ENCODE measurements at regions of chr17 and their contacts with region 1.

Region 1: GRCh38 chr17:39174907-39175694 is 9.1 kb upstream of the ARL5C start:
- DNase-seq: peak; percentile 56 to 89 (median 83)
- ATAC-seq: peak; percentile 93
- H3K4me3 ChIP-seq: no peak overlapping the region
- H3K4me3 Mint-ChIP-seq: no peak overlapping the region
- H3K27ac ChIP-seq: no peak overlapping the region
- H3K27ac Mint-ChIP-seq: no peak overlapping the region
- H3K4me1 ChIP-seq: peaks cover 15% of the 10 kb centered on the region
- H3K4me1 Mint-ChIP-seq: peaks cover 23% of the 10 kb centered on the region
- H3K27me3 ChIP-seq: no peaks in the 10 kb centered on the region
- H3K27me3 Mint-ChIP-seq: no peaks in the 10 kb centered on the region
- CTCF ChIP-seq: peak; percentile 85

Region 2: DNA sequence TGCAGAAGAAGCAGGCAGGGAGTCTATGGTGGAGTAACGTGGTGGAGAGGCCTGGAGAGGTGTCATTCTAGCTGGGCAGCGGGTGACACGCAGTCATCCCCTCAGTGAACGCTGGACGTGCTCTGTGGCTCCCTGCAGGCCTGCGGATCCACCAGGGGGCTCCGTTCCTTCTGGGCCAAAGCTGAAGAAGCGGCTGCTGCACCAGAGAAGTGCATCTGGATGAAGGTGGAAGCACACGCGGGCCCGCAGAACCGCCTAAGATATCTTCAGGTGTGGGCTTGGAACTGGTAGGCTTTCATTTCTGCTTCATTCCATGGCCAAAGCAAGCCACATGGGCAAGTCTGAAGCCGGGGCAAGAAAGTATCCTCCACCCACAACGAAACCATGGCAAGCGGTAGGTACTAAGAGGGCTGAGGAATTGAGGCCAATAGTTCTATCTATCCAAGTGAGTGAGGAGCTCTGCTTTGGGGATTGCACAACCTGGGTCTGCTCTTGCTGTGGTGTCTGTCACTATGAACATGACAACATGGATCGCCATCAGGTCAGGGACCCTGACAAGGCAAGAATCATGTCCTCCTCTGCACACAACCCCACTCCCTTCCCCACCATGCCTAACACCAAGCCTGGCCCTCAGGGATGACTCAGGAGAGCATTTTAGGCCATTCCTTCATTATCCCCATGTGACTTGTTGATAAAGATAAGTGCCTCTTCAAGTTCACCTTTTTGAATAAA is 129.0 kb before region 1 on chr17:
- CTCF ChIA-PET with region 1: interaction called, 11 read pairs
- POLR2A ChIA-PET with region 1: no interaction called
- intact Hi-C with region 1: no loop called
- DNase-seq: no peak
- ATAC-seq: no peak
- H3K4me3 ChIP-seq: no peak overlapping the region
- H3K4me3 Mint-ChIP-seq: no peak overlapping the region
- H3K27ac ChIP-seq: no peak overlapping the region
- H3K27ac Mint-ChIP-seq: no peak overlapping the region
- H3K4me1 ChIP-seq: no peaks in the 10 kb centered on the region
- H3K4me1 Mint-ChIP-seq: no peaks in the 10 kb centered on the region
- H3K27me3 ChIP-seq: no peaks in the 10 kb centered on the region
- H3K27me3 Mint-ChIP-seq: peaks cover 2% of the 10 kb centered on the region
- CTCF ChIP-seq: no peak

Region 3: DNA sequence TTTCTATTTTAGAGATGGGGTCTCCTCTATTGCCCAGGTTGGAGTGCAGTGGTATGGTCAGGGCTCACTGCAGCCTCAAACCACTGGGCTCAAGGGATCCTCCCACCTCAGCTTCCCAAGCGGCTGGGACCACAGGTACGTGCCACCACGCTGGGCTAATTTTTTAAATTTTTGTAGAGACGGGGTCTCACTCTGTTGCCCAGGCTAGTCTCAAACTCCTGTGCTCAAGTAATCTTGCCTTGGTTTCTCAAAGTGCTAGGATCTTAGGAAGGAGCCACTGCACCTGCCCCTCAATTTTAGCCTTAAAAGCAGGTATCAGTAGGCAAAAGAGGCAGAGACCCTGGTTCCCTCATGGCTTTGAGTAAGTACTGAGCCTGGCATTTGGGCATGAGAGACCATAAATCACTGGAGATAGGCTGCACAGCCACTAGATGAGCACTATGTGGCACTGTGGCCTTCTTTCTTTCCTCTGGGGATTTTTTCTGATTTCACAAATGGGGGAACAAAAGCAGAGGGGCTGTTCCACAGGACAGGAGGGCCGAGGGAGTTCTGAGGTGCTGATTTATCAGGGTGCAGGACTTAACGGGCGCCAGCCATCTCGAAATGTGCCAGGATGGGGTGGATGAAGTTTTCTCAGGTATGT is 105.9 kb before region 1 on chr17:
- CTCF ChIA-PET with region 1: interaction called, 15 read pairs
- POLR2A ChIA-PET with region 1: no interaction called
- intact Hi-C with region 1: loop called (anchors 1 kb)
- DNase-seq: peak in 7 of 9 experiments; percentile 2 to 76 (median 32)
- ATAC-seq: peak; percentile 96
- H3K4me3 ChIP-seq: no peak overlapping the region
- H3K4me3 Mint-ChIP-seq: no peak overlapping the region
- H3K27ac ChIP-seq: no peak overlapping the region
- H3K27ac Mint-ChIP-seq: peak overlapping the region; percentile 57
- H3K4me1 ChIP-seq: no peaks in the 10 kb centered on the region
- H3K4me1 Mint-ChIP-seq: peaks cover 5% of the 10 kb centered on the region
- H3K27me3 ChIP-seq: no peaks in the 10 kb centered on the region
- H3K27me3 Mint-ChIP-seq: no peaks in the 10 kb centered on the region
- CTCF ChIP-seq: peak; percentile 65

Region 4: DNA sequence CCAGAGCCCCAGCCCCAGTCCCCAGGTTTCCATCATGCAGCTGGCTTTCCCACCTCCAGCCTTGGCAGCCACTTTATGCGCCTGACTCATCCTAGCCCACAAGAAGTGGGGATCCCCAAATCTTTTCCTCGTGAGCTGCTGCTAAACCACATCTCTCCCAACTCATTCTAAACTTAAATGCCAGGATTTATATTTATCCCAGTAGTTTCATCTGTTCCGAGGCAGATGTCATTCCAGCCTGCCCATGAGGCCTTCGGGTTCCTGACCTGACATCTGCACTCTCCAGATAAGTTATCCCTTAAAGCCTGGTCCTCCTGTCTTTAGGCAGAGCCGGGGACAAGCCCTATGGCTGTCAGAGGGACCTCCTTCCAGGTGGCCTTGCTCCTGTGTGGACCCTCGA is 40.2 kb before region 1 on chr17:
- CTCF ChIA-PET with region 1: no interaction called
- POLR2A ChIA-PET with region 1: no interaction called
- intact Hi-C with region 1: no loop called
- DNase-seq: no peak
- ATAC-seq: no peak
- H3K4me3 ChIP-seq: no peak overlapping the region
- H3K4me3 Mint-ChIP-seq: no peak overlapping the region
- H3K27ac ChIP-seq: no peak overlapping the region
- H3K27ac Mint-ChIP-seq: no peak overlapping the region
- H3K4me1 ChIP-seq: no peaks in the 10 kb centered on the region
- H3K4me1 Mint-ChIP-seq: peaks cover 3% of the 10 kb centered on the region
- H3K27me3 ChIP-seq: no peaks in the 10 kb centered on the region
- H3K27me3 Mint-ChIP-seq: no peaks in the 10 kb centered on the region
- CTCF ChIP-seq: no peak

Region 5: DNA sequence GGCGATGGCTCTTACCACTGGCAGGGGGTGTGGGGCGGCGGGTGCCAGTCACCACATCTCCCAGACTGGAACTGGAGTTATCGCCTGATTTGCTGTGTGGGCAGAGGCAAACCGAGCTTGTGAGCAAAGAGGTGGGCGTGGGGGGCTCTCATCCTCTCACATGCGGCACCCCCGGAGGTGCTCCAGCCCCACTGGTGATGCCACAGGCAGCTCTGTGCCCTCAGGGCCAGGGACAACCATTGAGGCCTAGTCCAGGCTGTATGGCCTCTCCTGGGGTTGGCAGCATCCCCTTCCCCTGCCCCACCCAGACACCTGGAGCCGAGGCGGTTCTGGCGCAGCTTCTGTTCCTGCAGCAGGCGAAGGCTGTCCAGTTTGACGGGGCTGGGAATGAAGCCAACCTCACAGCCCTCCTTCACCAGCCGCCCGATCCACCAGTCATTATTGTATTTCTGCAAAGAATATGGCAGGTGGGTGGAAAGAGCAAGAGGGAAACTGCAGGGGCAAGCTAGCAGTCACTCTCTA is 11.4 kb after region 1 on chr17:
- CTCF ChIA-PET with region 1: interaction called, 45 read pairs
- POLR2A ChIA-PET with region 1: no interaction called
- intact Hi-C with region 1: no loop called
- DNase-seq: no peak
- ATAC-seq: no peak
- H3K4me3 ChIP-seq: no peak overlapping the region
- H3K4me3 Mint-ChIP-seq: no peak overlapping the region
- H3K27ac ChIP-seq: no peak overlapping the region
- H3K27ac Mint-ChIP-seq: no peak overlapping the region
- H3K4me1 ChIP-seq: no peaks in the 10 kb centered on the region
- H3K4me1 Mint-ChIP-seq: no peaks in the 10 kb centered on the region
- H3K27me3 ChIP-seq: no peaks in the 10 kb centered on the region
- H3K27me3 Mint-ChIP-seq: no peaks in the 10 kb centered on the region
- CTCF ChIP-seq: no peak

Region 6: DNA sequence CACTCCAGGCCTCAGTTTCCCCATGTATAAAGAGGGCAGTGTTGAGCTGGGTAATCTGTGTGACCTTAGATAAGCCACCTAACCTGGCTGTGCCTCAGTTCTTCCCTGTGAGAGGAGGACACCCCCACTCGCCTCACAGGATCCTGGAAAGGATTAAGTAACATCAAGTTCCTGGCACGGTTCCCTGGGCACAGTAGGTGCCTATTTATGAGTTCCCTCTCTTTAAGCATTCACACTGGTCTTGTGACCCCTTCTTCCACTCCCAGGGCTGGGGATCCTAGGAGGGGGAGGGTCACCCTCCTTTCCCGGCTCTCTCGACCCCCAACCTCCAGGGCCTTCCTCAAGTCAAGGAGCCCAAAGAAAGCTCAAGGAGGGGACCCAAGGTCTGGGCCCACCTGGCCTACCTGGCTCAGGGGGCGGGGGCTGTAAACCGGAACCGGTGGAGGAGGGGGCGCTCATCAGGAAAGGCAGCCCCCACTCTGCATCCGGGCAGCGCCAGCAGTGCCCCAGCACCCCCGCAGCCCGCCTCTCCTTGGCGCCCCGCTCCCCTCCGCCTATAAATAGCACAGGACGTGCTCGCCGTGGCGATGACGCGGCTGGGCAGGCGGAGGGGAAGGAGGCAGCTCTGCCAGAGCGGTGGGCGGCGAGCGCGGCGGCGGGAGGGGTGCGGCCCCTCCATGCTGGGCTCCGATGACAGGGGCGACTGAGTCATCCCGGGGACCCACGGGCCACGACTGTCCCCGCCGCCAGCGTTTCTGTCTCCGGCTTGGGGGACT is 34.4 kb after region 1 on chr17:
- CTCF ChIA-PET with region 1: interaction called, 10 read pairs
- POLR2A ChIA-PET with region 1: interaction called, 3 read pairs
- intact Hi-C with region 1: no loop called
- DNase-seq: peak; percentile 35 to 86 (median 79)
- ATAC-seq: peak; percentile 84
- H3K4me3 ChIP-seq: peak overlapping the region; percentile 34 to 49
- H3K4me3 Mint-ChIP-seq: peak overlapping the region; percentile 66
- H3K27ac ChIP-seq: peak overlapping the region; percentile 19 to 60
- H3K27ac Mint-ChIP-seq: peak overlapping the region; percentile 73
- H3K4me1 ChIP-seq: peaks cover 35% of the 10 kb centered on the region
- H3K4me1 Mint-ChIP-seq: peaks cover 31% of the 10 kb centered on the region
- H3K27me3 ChIP-seq: peaks cover 0 to 5% of the 10 kb centered on the region in 2 experiments
- H3K27me3 Mint-ChIP-seq: no peaks in the 10 kb centered on the region
- CTCF ChIP-seq: no peak

Region 7: DNA sequence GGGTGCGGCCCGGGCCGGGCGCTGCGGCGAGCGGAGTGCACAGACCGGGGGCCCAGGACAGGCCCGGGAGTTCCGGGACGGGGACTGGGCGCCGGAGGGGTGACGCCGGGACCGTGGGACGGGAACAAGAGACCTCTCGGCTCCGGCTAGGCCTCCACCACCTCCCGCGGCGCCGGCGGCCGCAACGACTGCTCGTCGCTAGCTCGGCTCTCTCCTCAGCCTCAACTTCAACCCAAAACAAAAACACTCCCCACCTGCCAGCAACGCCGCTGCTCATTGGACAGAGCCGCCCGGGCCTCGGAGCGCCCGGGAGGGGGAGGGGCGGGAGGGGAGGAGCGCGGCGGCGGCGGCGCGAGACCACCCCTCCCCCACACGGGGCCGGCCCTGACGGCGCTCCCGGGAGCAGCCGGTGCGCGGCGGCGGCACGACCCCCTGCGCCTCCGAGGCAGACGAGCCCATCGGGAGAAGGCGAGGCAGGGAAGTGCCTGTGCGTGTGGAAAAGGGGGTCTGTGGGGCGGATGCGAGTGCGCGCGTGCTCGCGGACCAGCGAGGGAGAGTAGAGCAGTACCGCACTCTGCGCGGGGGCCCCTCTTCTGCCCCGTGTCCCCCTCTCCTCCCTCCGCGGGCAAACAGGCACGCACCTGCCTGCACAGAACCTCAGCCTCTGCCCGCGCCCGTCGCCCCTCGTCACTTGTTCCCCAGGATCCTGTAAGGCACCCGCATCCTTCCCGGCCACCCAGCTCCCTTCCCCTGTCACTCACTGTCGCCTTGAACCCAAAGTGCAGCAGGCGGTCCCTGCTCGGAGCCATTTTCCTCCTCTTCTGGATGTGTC is 226.5 kb after region 1 on chr17 and contains the start of gene FBXL20:
- CTCF ChIA-PET with region 1: no interaction called
- POLR2A ChIA-PET with region 1: no interaction called
- intact Hi-C with region 1: no loop called
- DNase-seq: peak; percentile 90 to 96 (median 94)
- ATAC-seq: peak; percentile 78
- H3K4me3 ChIP-seq: peak within 1 kb of the TSS; percentile 89 to 96
- H3K4me3 Mint-ChIP-seq: peak within 1 kb of the TSS; percentile 98
- H3K27ac ChIP-seq: peak within 1 kb of the TSS; percentile 78 to 82
- H3K27ac Mint-ChIP-seq: peak within 1 kb of the TSS; percentile 97
- H3K4me1 ChIP-seq: peaks cover 14% of the 10 kb centered on the region
- H3K4me1 Mint-ChIP-seq: peaks cover 39% of the 10 kb centered on the region
- H3K27me3 ChIP-seq: no peaks in the 10 kb centered on the region
- H3K27me3 Mint-ChIP-seq: no peaks in the 10 kb centered on the region
- CTCF ChIP-seq: no peak
- total RNA-seq, gene FBXL20: 12.1 to 14.0 TPM

Region 8: DNA sequence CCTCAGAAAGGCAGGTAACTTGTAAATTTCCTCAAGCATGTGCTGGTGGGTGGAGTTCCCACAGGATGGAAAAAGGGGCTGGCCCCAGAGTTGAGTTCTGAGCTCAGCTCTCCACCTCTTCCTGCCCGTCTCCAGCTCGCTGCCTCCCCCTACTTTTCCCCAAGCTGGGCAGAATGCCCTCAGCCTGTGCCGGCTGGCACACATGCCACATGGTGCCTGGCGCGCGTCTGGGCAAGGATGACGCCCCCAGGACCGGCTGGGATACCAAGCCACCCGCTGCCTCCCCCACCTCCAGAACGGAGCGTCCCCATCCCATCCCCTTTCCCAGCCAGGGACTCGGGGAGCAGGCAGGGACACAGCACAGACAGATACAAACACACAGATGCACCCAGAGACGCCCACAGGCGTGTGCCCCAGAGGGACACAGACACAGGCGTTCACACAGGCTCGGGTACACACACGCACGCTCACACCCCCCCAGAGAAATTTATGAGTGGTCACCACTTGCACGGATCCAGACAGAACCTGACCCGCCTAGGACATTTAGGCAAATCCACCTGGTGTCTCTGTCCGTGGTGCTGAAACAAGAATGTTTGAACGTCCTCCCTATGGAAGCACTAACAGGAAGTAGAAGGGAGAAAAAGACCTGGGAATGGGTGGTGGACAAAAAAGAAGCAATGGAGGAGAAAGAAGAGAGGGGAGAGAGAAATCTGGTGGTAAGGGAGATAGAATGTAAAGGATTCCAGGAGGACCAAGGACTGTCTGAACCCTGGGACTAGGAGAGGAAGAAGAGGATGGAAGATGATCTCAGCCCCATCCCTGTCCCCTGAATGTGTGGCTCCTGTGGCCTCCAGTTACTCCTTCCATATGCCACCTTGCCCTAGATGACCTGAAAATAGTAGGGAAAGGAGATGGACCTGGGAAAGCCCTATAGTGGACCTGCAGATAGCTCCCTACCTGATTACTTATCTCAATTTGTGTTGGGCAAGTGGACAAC is 417.2 kb after region 1 on chr17:
- CTCF ChIA-PET with region 1: no interaction called
- POLR2A ChIA-PET with region 1: no interaction called
- intact Hi-C with region 1: no loop called
- DNase-seq: peak in 4 of 9 experiments; percentile 29 to 53 (median 47)
- ATAC-seq: peak; percentile 29
- H3K4me3 ChIP-seq: no peak overlapping the region
- H3K4me3 Mint-ChIP-seq: no peak overlapping the region
- H3K27ac ChIP-seq: no peak overlapping the region
- H3K27ac Mint-ChIP-seq: no peak overlapping the region
- H3K4me1 ChIP-seq: peaks cover 3% of the 10 kb centered on the region
- H3K4me1 Mint-ChIP-seq: peaks cover 7% of the 10 kb centered on the region
- H3K27me3 ChIP-seq: peaks cover 9 to 32% of the 10 kb centered on the region in 2 experiments
- H3K27me3 Mint-ChIP-seq: peaks cover 61% of the 10 kb centered on the region
- CTCF ChIP-seq: no peak